IMR-90 (cell line): ENCODE measurements at regions of chr3 and their contacts with region 1.

Region 1: DNA sequence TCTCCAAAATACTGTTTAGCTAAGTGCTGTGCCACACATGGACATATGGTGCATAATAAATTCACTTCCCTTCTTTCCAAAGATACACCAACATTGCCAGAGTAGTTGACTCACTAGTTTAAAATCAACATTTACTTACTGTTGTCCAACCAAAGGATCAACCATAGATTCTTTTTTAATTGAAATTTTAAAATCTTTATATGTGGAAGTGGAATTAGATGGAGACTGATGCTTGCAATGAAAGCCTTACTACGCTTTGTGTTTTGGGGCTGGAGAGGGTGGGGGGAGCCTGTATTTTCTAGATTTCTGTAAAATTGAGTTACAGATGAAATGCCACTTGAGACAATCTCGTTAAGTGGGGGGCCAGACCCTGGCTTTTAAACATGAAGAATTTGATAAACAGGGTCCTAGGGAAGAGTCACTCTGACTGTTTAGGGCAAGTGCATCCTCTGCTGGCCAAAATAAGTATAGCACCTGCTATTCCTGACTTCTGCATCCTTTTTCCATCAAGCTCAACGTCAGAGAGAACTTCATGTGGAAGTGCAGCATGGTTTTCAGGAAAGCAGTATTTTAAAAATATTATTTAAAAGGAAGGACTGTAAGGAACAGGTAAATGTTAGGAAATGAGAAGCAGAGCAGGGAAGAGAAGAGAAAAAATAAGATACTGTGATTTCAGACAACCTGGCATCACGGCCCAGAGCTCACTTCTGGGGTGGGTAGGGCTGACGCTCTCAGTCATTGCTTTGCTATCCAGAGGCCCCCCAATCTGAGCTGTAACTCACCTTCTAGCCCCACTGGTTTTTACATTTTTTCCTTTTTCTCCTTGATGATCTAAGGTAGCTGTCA is 76.7 kb downstream of the BOC start:
- DNase-seq: peak; percentile 72
- ATAC-seq: peak; percentile 64
- H3K4me3 ChIP-seq: no peak overlapping the region
- H3K27ac ChIP-seq: peak overlapping the region; percentile 59
- H3K4me1 ChIP-seq: peaks cover 14% of the 10 kb centered on the region
- H3K27me3 ChIP-seq: peaks cover 14% of the 10 kb centered on the region
- CTCF ChIP-seq: peak; percentile 99
- POLR2A ChIP-seq: peak; percentile 59; the same call in 1 of the 2 replicates
- RAD21 ChIP-seq: peak; percentile 97

Region 2: DNA sequence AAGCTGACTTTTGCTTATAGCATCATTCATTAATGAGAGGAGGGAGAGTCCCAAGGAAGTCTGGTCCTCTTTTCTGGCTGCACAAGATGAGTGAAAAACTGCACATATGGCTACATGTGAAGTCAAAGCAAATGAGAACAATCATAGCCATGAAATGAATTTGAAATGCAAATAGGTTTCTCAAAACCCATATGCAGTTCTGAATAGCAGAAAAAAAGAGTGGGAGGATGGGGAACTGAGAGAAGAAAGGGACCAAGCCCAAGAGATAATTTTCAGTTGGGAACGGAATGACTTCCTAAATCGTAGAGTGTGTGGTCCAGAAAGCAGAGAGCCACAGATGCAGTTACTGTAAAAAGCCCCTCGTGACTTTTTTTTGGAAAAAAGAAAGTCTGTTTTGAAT is 230.9 kb before region 1 on chr3:
- CTCF ChIA-PET with region 1: interaction called, 15 read pairs
- POLR2A ChIA-PET with region 1: no interaction called
- dilution Hi-C with region 1: no loop called
- in situ Hi-C with region 1: loop called (anchors 5 kb)
- intact Hi-C with region 1: no loop called
- DNase-seq: no peak
- ATAC-seq: no peak
- H3K4me3 ChIP-seq: no peak overlapping the region
- H3K27ac ChIP-seq: no peak overlapping the region
- H3K4me1 ChIP-seq: peaks cover 5% of the 10 kb centered on the region
- H3K27me3 ChIP-seq: peaks cover 17% of the 10 kb centered on the region
- CTCF ChIP-seq: no peak
- POLR2A ChIP-seq: no peak
- RAD21 ChIP-seq: no peak